Activated B cell treated with CpG ODN at 0.5 μM for 24 hours (primary cell): ENCODE measurements at regions of chr2 and their contacts with region 1.

Region 1: GRCh38 chr2:100242891-100243619 is 79.2 kb downstream of the LONRF2 start:
- DNase-seq: peak; percentile 67
- ATAC-seq: peak; percentile 41
- H3K4me3 Mint-ChIP-seq: peak overlapping the region; percentile 11
- H3K27ac Mint-ChIP-seq: peak overlapping the region; percentile 62
- H3K4me1 Mint-ChIP-seq: peaks cover 77% of the 10 kb centered on the region
- H3K27me3 Mint-ChIP-seq: peaks cover 11% of the 10 kb centered on the region
- CTCF ChIP-seq: peak; percentile 84

Region 2: GRCh38 chr2:99722476-99722875 is 520.6 kb before region 1 on chr2:
- CTCF ChIA-PET with region 1: no interaction called
- POLR2A ChIA-PET with region 1: no interaction called
- intact Hi-C with region 1: loop called (anchors 5 kb)
- DNase-seq: no peak
- ATAC-seq: no peak
- H3K4me3 Mint-ChIP-seq: no peak overlapping the region
- H3K27ac Mint-ChIP-seq: no peak overlapping the region
- H3K4me1 Mint-ChIP-seq: no peaks in the 10 kb centered on the region
- H3K27me3 Mint-ChIP-seq: no peaks in the 10 kb centered on the region
- CTCF ChIP-seq: no peak

Region 3: DNA sequence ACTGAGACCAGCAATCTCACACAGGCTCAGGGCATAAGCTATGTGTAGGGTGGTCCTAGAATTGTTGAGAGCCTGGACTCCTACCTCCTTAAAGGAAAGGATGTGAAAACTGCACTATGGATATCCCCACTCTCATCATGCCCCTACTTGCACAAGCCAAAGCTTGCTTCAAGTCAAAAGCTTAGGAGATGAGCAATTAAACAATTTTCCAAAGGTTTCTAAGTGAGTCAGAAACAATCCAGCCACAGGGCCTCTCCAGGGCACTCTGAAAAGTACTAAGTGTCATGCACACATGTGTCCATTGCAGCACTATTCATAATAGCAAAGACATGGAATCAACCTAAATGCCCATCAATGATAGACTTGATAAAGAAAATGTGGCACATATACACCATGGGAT is 316.1 kb before region 1 on chr2:
- CTCF ChIA-PET with region 1: interaction called, 3 read pairs
- POLR2A ChIA-PET with region 1: no interaction called
- intact Hi-C with region 1: loop called (anchors 5 kb)
- DNase-seq: no peak
- ATAC-seq: no peak
- H3K4me3 Mint-ChIP-seq: no peak overlapping the region
- H3K27ac Mint-ChIP-seq: peak overlapping the region; percentile 91
- H3K4me1 Mint-ChIP-seq: peaks cover 85% of the 10 kb centered on the region
- H3K27me3 Mint-ChIP-seq: no peaks in the 10 kb centered on the region
- CTCF ChIP-seq: no peak

Region 4: DNA sequence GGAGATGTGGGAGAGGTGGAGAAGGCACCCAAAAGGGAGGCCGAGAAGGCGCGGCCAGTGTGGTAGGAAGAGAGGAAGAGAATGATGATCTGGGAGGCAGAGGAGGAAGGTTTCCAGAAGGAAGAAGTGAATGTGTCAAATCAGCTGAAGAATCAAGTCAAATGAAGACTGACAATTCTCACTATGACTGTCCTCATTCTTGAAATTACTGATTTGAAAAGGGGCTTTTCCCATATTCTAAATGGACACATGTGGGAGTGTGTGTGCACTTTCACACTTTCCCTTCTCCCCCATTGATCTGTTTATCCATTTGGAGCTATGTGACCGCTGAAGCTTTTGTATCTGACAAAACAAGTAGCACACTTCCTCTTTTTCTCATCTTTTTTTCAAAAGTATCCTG is 106.7 kb before region 1 on chr2:
- CTCF ChIA-PET with region 1: interaction called, 19 read pairs
- POLR2A ChIA-PET with region 1: interaction called, 135 read pairs
- intact Hi-C with region 1: loop called (anchors 1 kb)
- DNase-seq: no peak
- ATAC-seq: peak; percentile 33
- H3K4me3 Mint-ChIP-seq: no peak overlapping the region
- H3K27ac Mint-ChIP-seq: no peak overlapping the region
- H3K4me1 Mint-ChIP-seq: peaks cover 27% of the 10 kb centered on the region
- H3K27me3 Mint-ChIP-seq: no peaks in the 10 kb centered on the region
- CTCF ChIP-seq: no peak

Region 5: DNA sequence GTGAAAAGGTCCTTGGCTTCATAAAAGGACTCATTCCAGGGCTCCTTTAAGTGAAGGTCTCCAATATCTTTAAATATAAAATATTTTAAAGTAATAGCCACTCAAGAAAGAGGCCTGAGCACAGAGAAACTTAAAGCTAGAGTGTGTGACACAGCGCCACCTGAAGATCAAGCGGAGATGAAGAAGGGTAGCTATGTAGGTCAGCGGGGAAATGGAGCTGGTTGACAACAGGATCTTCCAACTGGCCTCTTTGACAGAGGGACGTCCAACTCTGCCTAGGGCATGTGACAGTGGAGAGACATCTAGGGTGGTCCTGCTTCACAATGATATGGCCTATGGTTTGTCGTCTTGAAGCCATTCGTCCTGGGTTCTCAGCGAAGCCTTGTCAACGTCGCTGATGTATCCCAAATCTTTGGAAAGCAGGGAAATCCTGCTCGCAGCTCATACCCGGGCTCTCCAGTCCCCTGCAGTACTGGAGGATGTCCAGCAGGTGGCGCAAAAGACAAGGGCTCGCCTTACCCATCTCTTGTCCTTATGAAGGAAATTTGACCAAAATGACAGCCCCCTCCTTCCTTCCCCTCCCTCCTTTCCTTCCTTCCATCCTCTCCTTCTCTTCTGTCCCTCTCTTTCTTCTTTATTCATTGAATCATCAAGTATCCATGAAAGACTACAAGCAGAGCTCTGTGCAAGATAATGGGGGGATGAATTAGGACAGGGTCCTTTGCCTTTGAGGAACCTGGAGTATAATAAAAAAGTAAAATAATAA is 19.7 kb after region 1 on chr2:
- CTCF ChIA-PET with region 1: interaction called, 53 read pairs
- POLR2A ChIA-PET with region 1: interaction called, 4 read pairs
- intact Hi-C with region 1: no loop called
- DNase-seq: peak; percentile 51
- ATAC-seq: peak; percentile 76
- H3K4me3 Mint-ChIP-seq: no peak overlapping the region
- H3K27ac Mint-ChIP-seq: no peak overlapping the region
- H3K4me1 Mint-ChIP-seq: peaks cover 8% of the 10 kb centered on the region
- H3K27me3 Mint-ChIP-seq: no peaks in the 10 kb centered on the region
- CTCF ChIP-seq: peak; percentile 92